A549 (cell line): ENCODE measurements at regions of chr3 and their contacts with region 1.

Region 1: DNA sequence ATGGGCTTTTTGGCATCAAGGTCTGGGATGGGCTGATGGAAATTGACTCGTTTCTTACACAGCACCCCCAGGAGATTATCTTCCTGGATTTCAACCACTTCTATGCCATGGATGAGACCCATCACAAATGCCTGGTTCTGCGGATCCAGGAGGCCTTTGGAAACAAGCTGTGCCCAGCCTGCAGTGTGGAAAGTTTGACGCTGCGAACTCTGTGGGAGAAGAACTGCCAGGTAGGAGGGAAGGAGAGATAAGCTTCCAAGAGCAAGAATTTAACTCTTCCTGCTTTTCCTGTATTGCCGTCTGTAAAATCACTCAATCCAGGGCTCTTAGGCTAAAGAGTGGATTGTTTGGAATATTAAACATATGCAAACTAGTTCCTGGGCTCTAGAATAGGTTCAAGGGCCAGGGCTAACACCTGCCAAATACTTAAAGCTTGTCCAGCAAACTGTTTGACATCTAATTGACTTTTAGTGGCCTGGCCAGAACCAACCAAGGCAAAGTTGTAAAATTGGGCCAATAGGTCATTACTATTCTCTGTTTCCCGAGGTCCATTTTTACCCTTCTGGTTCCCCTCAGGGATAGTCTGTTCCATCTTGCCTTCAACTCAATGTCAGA is 113.1 kb upstream of the ZBED2 start:
- DNase-seq: no peak
- ATAC-seq: no peak
- H3K4me3 ChIP-seq: no peak overlapping the region
- H3K27ac ChIP-seq: no peak overlapping the region
- H3K4me1 ChIP-seq: no peaks in the 10 kb centered on the region
- CTCF ChIP-seq: no peak
- EP300 ChIP-seq: no peak
- POLR2A ChIP-seq: no peak
- RAD21 ChIP-seq: no peak

Region 2: DNA sequence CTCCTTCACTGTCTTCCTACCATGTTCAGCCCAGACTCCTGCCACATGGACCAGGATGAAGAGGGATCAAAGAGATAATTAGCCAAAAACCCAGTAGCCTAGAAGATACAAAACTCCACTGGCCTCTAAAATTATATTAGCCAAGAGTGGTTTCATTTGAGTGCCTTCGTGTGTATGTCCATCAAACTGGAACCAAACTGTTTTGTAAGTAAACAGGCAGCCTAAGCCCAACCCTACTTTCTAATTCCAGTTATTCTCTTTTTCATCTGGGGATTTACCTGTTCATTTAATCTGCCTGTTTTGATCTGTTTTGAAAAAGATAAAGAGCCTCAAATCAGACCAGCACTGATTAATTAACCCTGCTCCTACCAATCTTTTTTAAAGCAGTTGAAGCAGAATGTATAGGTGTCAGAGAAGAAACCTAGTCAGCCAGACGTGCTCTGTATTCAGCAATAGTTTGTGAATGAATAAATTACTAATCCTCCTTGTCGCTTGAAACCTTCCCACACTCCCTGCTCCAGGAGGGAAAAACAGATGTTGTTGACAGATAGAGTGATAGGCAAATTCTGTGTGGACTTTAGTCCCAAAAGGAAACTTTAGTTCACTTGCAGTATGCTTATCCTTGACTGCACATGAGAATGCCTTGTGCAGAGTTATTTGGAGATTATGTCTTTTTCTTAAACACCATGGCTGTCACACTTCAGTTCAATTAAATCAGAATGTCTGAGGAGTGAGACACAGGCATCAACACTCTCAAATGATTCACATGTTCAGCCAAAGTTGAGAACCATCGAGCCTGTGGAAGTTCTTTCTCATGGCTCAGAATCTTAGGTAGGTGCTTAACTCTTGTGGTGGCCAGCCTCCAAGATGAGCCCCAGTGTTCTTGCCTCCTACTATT is 57.6 kb before region 1 on chr3:
- CTCF ChIA-PET with region 1: no interaction called
- POLR2A ChIA-PET with region 1: no interaction called
- DNase-seq: no peak
- ATAC-seq: no peak
- H3K4me3 ChIP-seq: no peak overlapping the region
- H3K27ac ChIP-seq: no peak overlapping the region
- H3K4me1 ChIP-seq: peaks cover 14% of the 10 kb centered on the region; the same call in 2 of the 3 replicates
- CTCF ChIP-seq: no peak
- EP300 ChIP-seq: no peak
- POLR2A ChIP-seq: no peak
- RAD21 ChIP-seq: no peak

Region 3: GRCh38 chr3:111691293-111691909 is 16.9 kb before region 1 on chr3:
- CTCF ChIA-PET with region 1: interaction called, 21 read pairs
- POLR2A ChIA-PET with region 1: no interaction called
- DNase-seq: peak; percentile 40 to 59
- ATAC-seq: peak; percentile 79 to 84; a peak in 5 of 6 replicates
- H3K4me3 ChIP-seq: no peak overlapping the region
- H3K27ac ChIP-seq: peak overlapping the region in 1 of 2 experiments; percentile 57; a peak in 1 of 6 replicates
- H3K4me1 ChIP-seq: peaks cover 68% of the 10 kb centered on the region
- CTCF ChIP-seq: peak; percentile 83
- EP300 ChIP-seq: no peak
- POLR2A ChIP-seq: no peak
- RAD21 ChIP-seq: peak; percentile 76 to 82